ENCODE measurements at regions of chr19 and their contacts with region 1.

Region 1: GRCh38 chr19:40662921-40663694 is 27.3 kb downstream of the NUMBL start:
- DNase-seq: peak; percentile 93
- H3K4me3 ChIP-seq: peak overlapping the region; percentile 61 to 91
- H3K27ac ChIP-seq: peak overlapping the region; percentile 62 to 67
- H3K4me1 ChIP-seq: peaks cover 6 to 10% of the 10 kb centered on the region in 2 experiments; a peak in 3 of 4 replicates
- H3K27me3 ChIP-seq: no peaks in the 10 kb centered on the region
- CTCF ChIP-seq: no peak; the same call in 1 of the 2 replicates
- EP300 ChIP-seq: no peak
- RAD21 ChIP-seq: peak; percentile 89

Region 2: GRCh38 chr19:40650749-40651305 is 12.3 kb before region 1 on chr19:
- CTCF ChIA-PET with region 1: interaction called, 31 read pairs
- POLR2A ChIA-PET with region 1: no interaction called
- DNase-seq: no peak
- H3K4me3 ChIP-seq: no peak overlapping the region
- H3K27ac ChIP-seq: no peak overlapping the region
- H3K4me1 ChIP-seq: peaks cover 0 to under 1% of the 10 kb centered on the region in 2 experiments; a peak in 1 of 4 replicates
- H3K27me3 ChIP-seq: no peaks in the 10 kb centered on the region
- CTCF ChIP-seq: no peak
- EP300 ChIP-seq: no peak
- RAD21 ChIP-seq: no peak

Region 3: GRCh38 chr19:40690693-40691420 is 27.7 kb after region 1 on chr19:
- CTCF ChIA-PET with region 1: interaction called, 5 read pairs
- POLR2A ChIA-PET with region 1: interaction called, 15 read pairs
- DNase-seq: peak; percentile 83
- H3K4me3 ChIP-seq: peak overlapping the region; percentile 69 to 71
- H3K27ac ChIP-seq: peak overlapping the region; percentile 88 to 90
- H3K4me1 ChIP-seq: peaks cover 9 to 28% of the 10 kb centered on the region in 2 experiments; a peak in 2 of 4 replicates
- H3K27me3 ChIP-seq: no peaks in the 10 kb centered on the region
- CTCF ChIP-seq: no peak
- EP300 ChIP-seq: no peak
- RAD21 ChIP-seq: no peak

Region 4: GRCh38 chr19:40798223-40798996 is 135.3 kb after region 1 on chr19:
- CTCF ChIA-PET with region 1: interaction called, 11 read pairs
- POLR2A ChIA-PET with region 1: no interaction called
- DNase-seq: peak; percentile 77
- H3K4me3 ChIP-seq: peak overlapping the region; percentile 50 to 65
- H3K27ac ChIP-seq: peak overlapping the region; percentile 84 to 89
- H3K4me1 ChIP-seq: peaks cover 31 to 37% of the 10 kb centered on the region in 2 experiments; a peak in 2 of 4 replicates
- H3K27me3 ChIP-seq: no peaks in the 10 kb centered on the region
- CTCF ChIP-seq: peak; percentile 65
- EP300 ChIP-seq: no peak
- RAD21 ChIP-seq: peak; percentile 14; the same call in 1 of the 2 replicates

Region 5: GRCh38 chr19:40813182-40813958 is 150.3 kb after region 1 on chr19:
- CTCF ChIA-PET with region 1: interaction called, 54 read pairs
- POLR2A ChIA-PET with region 1: no interaction called
- DNase-seq: no peak
- H3K4me3 ChIP-seq: no peak overlapping the region
- H3K27ac ChIP-seq: no peak overlapping the region
- H3K4me1 ChIP-seq: peaks cover 6 to 9% of the 10 kb centered on the region in 2 experiments; a peak in 3 of 4 replicates
- H3K27me3 ChIP-seq: no peaks in the 10 kb centered on the region
- CTCF ChIP-seq: no peak
- EP300 ChIP-seq: no peak
- RAD21 ChIP-seq: no peak